Dorsolateral prefrontal cortex (tissue), 120 donors: ENCODE measurements at regions of chr17 and their contacts with region 1.

Region 1: DNA sequence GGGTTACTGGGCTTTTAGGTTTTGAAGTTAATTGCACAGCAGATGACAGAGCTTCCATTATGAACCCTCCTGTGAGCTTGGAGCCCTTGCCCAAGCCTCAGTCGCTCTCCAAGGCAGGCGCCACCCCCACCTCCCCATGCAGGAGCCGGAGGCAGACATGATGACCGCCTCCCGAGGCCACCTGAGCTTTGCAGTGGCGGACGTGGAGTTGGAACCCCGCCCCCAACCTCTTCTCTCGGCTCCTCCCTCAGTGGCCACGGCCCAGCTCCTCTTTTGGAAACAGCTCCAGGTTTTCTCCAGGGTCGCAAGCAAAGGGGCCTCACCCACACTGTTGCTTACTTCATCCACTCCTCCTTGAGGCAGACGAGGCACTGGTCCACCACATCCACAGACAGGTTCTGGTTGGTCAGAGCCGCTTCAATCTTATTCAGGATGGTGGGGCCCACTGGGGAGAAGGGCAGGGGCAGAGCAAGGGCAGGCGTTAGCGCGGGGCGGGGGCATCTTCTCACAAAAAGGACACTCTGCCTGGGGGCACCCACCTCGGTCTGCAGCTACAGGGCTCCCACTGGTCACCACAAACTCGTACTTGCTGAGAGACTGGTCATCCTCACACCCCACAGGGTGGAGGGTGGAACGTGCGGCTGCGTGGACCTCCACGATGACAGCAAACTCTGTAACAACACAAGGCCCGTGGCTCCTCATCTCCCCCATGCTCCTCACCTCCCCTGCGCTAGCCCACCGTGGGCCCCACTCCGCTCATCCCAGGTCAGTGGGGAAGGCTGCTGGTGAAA is 8.7 kb upstream of the PLD6 start:
- DNase-seq: no peak
- H3K4me3 ChIP-seq: no peak overlapping the region
- H3K27ac ChIP-seq: peak overlapping the region in 2 of 59 donors; percentile 1 to 53
- H3K27me3 ChIP-seq: no peaks in the 10 kb centered on the region
- CTCF ChIP-seq: no peak

Region 2: GRCh38 chr17:17164676-17165075 is 50.2 kb before region 1 on chr17:
- intact Hi-C with region 1: loop called in 1 of 2 experiments (anchors 5 kb)
- DNase-seq: no peak
- H3K4me3 ChIP-seq: no peak overlapping the region
- H3K27ac ChIP-seq: peak overlapping the region in 6 of 59 donors; percentile 2 to 52 (median 28)
- H3K27me3 ChIP-seq: no peaks in the 10 kb centered on the region
- CTCF ChIP-seq: no peak